ENCODE measurements at regions of chr20 and their contacts with region 1.

Region 1: GRCh38 chr20:50224531-50225255 is 34.1 kb downstream of the CEBPB start:
- DNase-seq: peak; percentile 97
- H3K4me3 ChIP-seq: no peak overlapping the region
- H3K27ac ChIP-seq: peak overlapping the region; percentile 61 to 86 (median 80)
- H3K4me1 ChIP-seq: peaks cover 0 to 34% (median 24%) of the 10 kb centered on the region in 4 donors
- H3K27me3 ChIP-seq: no peaks in the 10 kb centered on the region
- CTCF ChIP-seq: peak in 1 of 4 experiments; percentile 15
- EP300 ChIP-seq: peak; percentile 78 to 98 (median 86)
- POLR2A ChIP-seq: no peak

Region 2: GRCh38 chr20:50292324-50293243 is 67.9 kb after region 1 on chr20:
- intact Hi-C with region 1: loop called (anchors 5 kb)
- DNase-seq: peak; percentile 98
- H3K4me3 ChIP-seq: no peak overlapping the region
- H3K27ac ChIP-seq: peak overlapping the region; percentile 70 to 81 (median 73)
- H3K4me1 ChIP-seq: peaks cover 0 to 24% (median 23%) of the 10 kb centered on the region in 4 donors
- H3K27me3 ChIP-seq: no peaks in the 10 kb centered on the region
- CTCF ChIP-seq: no peak
- EP300 ChIP-seq: peak in 3 of 4 donors; percentile 86 to 99 (median 92)
- POLR2A ChIP-seq: no peak